ENCODE measurements at regions of chr11 and their contacts with region 1.

Region 1: GRCh38 chr11:121460941-121461514 is 8.3 kb upstream of the SORL1-AS1 start:
- DNase-seq: no peak
- H3K4me3 ChIP-seq: no peak overlapping the region
- H3K27ac ChIP-seq: no peak overlapping the region
- H3K4me1 ChIP-seq: peaks cover under 1% of the 10 kb centered on the region
- H3K27me3 ChIP-seq: no peaks in the 10 kb centered on the region
- CTCF ChIP-seq: no peak

Region 2: GRCh38 chr11:120055646-120056045 is 1405.4 kb before region 1 on chr11:
- CTCF ChIA-PET with region 1: no interaction called
- POLR2A ChIA-PET with region 1: interaction called, 15 read pairs
- intact Hi-C with region 1: no loop called
- DNase-seq: no peak
- H3K4me3 ChIP-seq: no peak overlapping the region
- H3K27ac ChIP-seq: no peak overlapping the region
- H3K4me1 ChIP-seq: no peaks in the 10 kb centered on the region
- H3K27me3 ChIP-seq: peaks cover 14% of the 10 kb centered on the region
- CTCF ChIP-seq: no peak